Activated CD4-positive, alpha-beta T cell treated with anti-CD3 and anti-CD28 coated beads for 36 hours (primary cell): ENCODE measurements at regions of chr6 and their contacts with region 1.

Region 1: DNA sequence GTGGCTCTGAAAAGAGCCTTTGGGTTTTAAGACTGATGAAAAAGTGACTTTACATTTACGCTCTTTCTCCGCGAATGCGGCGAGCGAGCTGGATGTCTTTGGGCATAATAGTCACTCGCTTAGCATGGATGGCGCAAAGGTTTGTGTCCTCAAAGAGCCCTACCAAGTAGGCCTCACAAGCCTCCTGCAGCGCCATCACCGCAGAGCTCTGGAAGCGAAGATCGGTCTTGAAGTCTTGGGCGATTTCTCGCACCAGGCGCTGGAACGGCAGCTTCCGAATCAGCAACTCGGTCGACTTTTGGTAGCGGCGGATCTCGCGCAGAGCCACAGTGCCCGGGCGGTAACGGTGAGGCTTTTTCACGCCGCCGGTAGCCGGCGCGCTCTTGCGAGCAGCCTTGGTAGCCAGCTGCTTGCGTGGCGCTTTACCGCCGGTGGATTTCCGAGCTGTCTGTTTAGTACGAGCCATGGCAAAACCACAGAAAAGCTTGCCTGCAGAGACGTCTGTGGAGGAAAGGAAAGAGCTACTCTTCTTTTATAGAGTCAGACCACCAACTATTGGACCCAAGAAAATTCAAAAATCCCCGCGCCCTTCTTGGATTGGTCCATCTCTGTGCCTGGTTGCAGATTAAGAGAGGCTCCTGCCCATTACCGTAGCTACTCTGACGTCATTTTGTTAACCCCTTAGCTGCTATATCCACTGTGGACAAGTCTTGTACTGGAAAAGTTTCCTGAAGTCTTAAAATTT is 55.5 kb upstream of the HFE start:
- DNase-seq: peak; percentile 92
- ATAC-seq: peak; percentile 69
- H3K4me3 Mint-ChIP-seq: peak overlapping the region; percentile 81
- H3K27ac Mint-ChIP-seq: peak overlapping the region; percentile 98
- H3K4me1 Mint-ChIP-seq: peaks cover 50% of the 10 kb centered on the region
- H3K27me3 Mint-ChIP-seq: no peaks in the 10 kb centered on the region

Region 2: GRCh38 chr6:25934156-25934555 is 97.6 kb before region 1 on chr6:
- CTCF ChIA-PET with region 1: no interaction called
- POLR2A ChIA-PET with region 1: interaction called, 10 read pairs
- intact Hi-C with region 1: no loop called
- DNase-seq: peak; percentile 52
- ATAC-seq: peak; percentile 92
- H3K4me3 Mint-ChIP-seq: no peak overlapping the region
- H3K27ac Mint-ChIP-seq: no peak overlapping the region
- H3K4me1 Mint-ChIP-seq: peaks cover 8% of the 10 kb centered on the region
- H3K27me3 Mint-ChIP-seq: peaks cover 10% of the 10 kb centered on the region

Region 3: DNA sequence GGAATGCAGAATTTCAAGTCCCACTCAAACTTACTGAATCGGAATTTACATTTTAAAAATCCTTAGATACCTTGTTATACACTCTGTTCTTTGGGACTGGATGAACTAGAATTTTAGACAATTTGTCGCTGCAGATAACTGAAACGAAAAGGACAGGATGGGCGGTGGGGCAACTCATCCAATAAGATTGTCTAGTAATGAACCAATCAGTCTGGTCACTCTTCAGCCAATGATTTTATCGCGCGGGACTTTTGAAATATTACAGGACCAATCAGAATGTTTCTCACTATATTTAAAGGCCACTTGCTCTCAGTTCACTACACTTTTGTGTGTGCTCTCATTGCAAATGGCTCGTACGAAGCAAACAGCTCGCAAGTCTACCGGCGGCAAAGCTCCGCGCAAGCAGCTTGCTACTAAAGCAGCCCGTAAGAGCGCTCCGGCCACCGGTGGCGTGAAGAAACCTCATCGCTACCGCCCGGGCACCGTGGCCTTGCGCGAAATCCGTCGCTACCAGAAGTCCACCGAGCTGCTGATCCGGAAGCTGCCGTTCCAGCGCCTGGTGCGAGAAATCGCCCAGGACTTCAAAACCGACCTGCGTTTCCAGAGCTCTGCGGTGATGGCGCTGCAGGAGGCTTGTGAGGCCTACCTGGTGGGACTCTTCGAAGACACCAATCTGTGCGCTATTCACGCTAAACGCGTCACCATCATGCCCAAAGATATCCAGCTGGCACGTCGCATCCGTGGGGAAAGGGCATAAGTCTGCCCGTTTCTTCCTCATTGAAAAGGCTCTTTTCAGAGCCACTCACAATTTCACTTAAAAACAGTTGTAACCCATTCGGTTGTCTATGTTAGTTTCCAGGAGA is 13.5 kb after region 1 on chr6:
- CTCF ChIA-PET with region 1: interaction called, 49 read pairs
- POLR2A ChIA-PET with region 1: interaction called, 571 read pairs
- intact Hi-C with region 1: loop called (anchors 1 kb)
- DNase-seq: peak; percentile 83
- ATAC-seq: peak; percentile 63
- H3K4me3 Mint-ChIP-seq: peak overlapping the region; percentile 79
- H3K27ac Mint-ChIP-seq: peak overlapping the region; percentile 99
- H3K4me1 Mint-ChIP-seq: peaks cover 18% of the 10 kb centered on the region
- H3K27me3 Mint-ChIP-seq: no peaks in the 10 kb centered on the region

Region 4: DNA sequence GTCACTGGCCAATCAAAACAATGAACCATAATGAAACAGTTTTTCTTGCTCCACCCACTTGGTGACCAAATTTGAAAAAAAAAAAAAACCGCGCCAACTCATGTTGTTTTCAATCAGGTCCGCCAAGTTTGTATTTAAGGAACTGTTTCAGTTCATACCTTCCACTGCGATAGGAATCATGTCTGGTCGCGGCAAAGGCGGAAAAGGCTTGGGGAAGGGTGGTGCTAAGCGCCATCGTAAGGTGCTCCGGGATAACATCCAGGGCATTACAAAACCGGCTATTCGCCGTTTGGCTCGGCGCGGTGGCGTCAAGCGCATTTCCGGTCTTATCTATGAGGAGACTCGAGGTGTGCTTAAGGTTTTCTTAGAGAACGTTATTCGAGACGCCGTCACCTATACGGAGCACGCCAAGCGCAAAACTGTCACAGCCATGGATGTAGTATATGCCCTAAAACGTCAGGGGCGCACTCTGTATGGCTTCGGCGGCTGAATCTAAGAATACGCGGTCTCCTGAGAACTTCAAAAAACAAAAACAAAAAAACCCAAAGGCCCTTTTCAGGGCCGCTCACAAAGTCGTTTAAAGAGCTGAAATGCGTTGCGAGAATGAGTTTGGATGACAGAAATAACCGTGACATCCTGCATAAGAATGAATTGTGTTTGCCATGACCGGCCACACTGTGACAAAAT is 72.1 kb after region 1 on chr6:
- CTCF ChIA-PET with region 1: interaction called, 4 read pairs
- POLR2A ChIA-PET with region 1: interaction called, 9 read pairs
- intact Hi-C with region 1: loop called (anchors 1 kb)
- DNase-seq: peak; percentile 92
- ATAC-seq: peak; percentile 89
- H3K4me3 Mint-ChIP-seq: peak overlapping the region; percentile 82
- H3K27ac Mint-ChIP-seq: peak overlapping the region; percentile 97
- H3K4me1 Mint-ChIP-seq: peaks cover 16% of the 10 kb centered on the region
- H3K27me3 Mint-ChIP-seq: no peaks in the 10 kb centered on the region

Region 5: DNA sequence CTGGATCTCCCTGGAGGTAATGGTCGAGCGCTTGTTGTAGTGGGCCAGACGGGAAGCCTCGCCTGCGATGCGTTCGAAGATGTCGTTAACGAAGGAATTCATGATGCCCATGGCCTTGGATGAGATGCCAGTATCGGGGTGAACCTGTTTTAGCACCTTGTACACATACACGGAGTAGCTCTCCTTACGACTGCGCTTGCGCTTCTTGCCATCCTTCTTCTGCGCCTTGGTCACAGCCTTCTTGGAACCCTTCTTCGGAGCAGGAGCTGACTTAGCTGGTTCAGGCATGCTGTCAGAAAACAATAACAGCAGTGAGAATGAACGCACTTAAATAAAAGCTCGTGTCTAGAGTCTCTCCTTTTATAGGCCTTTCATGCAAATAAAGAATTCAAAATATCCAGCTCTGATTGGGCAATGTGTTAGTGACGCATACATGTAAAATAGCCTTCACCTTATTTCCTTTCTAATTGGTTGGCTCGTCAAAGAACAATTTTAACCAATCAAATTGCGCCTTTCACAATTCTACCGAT is 184.7 kb after region 1 on chr6:
- CTCF ChIA-PET with region 1: no interaction called
- POLR2A ChIA-PET with region 1: interaction called, 26 read pairs
- intact Hi-C with region 1: no loop called
- DNase-seq: peak; percentile 88
- ATAC-seq: peak; percentile 76
- H3K4me3 Mint-ChIP-seq: no peak overlapping the region
- H3K27ac Mint-ChIP-seq: no peak overlapping the region
- H3K4me1 Mint-ChIP-seq: peaks cover 2% of the 10 kb centered on the region
- H3K27me3 Mint-ChIP-seq: no peaks in the 10 kb centered on the region

Region 6: GRCh38 chr6:27864906-27865849 is 1833.4 kb after region 1 on chr6:
- CTCF ChIA-PET with region 1: no interaction called
- POLR2A ChIA-PET with region 1: interaction called, 20 read pairs
- intact Hi-C with region 1: no loop called
- DNase-seq: peak; percentile 86
- ATAC-seq: peak; percentile 57
- H3K4me3 Mint-ChIP-seq: peak overlapping the region; percentile 94
- H3K27ac Mint-ChIP-seq: peak overlapping the region; percentile 99
- H3K4me1 Mint-ChIP-seq: peaks cover 40% of the 10 kb centered on the region
- H3K27me3 Mint-ChIP-seq: no peaks in the 10 kb centered on the region